AG04450 (cell line): ENCODE measurements at regions of chr12 and their contacts with region 1.

Region 1: DNA sequence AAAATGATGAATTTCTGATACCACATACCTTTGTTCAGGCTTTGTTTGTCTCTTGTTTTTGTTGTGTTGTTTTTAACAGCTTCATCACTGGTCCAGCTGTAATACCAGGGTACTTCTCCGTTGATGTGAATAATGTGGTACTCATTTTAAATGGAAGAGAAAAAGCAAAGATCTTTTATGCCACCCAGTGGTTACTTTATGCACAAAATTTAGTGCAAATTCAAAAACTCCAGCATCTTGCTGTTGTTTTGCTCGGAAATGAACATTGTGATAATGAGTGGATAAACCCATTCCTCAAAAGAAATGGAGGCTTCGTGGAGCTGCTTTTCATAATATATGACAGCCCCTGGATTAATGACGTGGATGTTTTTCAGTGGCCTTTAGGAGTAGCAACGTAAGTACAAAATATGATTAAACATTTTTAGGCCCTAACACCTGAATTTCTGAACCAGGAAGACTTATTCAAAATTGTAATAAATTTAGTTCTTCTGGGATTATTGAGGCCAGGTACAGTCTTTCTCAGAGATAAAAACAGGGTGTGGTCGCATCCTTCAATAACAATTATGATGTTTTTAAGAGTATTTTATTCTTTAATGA is 22.4 kb downstream of the RXYLT1 start:
- DNase-seq: no peak
- H3K4me3 ChIP-seq: no peak overlapping the region
- H3K27ac ChIP-seq: no peak overlapping the region
- H3K27me3 ChIP-seq: no peaks in the 10 kb centered on the region
- CTCF ChIP-seq: peak; percentile 71

Region 2: DNA sequence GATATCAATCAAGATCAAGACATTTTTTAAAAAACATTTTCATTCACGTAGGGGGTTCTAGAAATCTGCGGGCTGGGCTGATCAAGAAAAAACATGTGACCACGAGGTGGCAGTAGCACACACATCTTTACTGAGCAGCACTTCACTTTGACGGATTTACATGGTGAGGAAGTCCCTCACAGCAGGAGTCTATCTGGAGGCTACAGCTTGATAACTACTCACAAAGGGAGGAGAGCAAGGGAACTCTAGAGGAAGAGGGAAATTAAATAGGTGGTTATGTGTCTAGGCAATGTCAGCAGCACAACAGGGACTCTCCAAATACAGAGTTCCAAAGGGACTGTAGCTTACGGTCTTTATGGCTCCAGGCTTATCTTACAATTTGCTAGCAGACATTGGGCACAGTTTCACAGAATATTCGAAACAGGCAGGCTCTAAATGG is 381.9 kb before region 1 on chr12:
- CTCF ChIA-PET with region 1: interaction called, 130 read pairs
- POLR2A ChIA-PET with region 1: no interaction called
- DNase-seq: peak; percentile 27
- H3K4me3 ChIP-seq: no peak overlapping the region
- H3K27ac ChIP-seq: no peak overlapping the region
- H3K27me3 ChIP-seq: no peaks in the 10 kb centered on the region
- CTCF ChIP-seq: peak; percentile 69

Region 3: DNA sequence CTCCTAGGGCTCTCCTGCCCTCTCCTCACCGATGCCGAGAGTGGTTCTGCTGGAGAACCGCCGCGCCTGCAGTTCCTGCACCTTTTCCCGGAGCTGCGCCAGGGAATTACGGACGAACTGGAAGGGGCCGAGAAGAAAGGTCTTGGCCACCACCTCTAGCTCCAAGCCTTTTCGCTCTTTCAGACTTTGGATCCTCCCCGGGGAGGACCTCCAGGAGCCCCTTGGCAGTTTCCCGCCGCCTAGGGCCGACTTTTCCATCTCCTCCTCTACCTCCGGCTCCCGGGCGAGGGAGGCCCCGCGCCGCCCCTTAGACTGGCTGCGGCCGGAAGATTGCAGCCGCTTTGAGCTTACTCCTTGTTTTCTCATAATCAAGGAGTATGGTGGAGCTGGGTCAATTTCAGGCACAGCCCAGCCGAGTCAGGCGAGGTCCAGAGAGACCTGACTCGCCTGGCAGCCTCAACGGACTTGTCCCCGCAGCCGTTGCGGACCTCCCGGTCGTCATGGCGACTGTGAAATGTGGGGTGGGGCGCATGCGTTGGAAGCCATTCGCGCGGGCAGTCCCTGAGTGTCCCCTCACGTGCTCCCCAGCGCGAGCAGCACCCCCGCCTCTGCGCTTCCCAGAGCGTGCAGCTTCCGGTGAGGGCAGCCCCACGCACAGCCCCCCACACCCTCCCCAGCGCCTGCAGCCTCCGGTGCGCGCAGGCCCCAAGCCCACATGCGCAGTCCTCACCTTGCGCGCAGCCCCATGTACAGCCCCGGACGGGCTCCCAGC is 133.9 kb before region 1 on chr12 and contains the start of gene DPY19L2:
- CTCF ChIA-PET with region 1: interaction called, 13 read pairs
- POLR2A ChIA-PET with region 1: no interaction called
- DNase-seq: peak; percentile 32
- H3K4me3 ChIP-seq: peak within 1 kb of the TSS; percentile 75
- H3K27ac ChIP-seq: peak within 1 kb of the TSS; percentile 61
- H3K27me3 ChIP-seq: no peaks in the 10 kb centered on the region
- CTCF ChIP-seq: no peak
- polyA plus RNA-seq, gene DPY19L2: 5.1 and 7.8 TPM in 2 replicates

Region 4: GRCh38 chr12:63779498-63780481 is 22.3 kb before region 1 on chr12 and contains the start of gene RXYLT1:
- CTCF ChIA-PET with region 1: interaction called, 11 read pairs
- POLR2A ChIA-PET with region 1: no interaction called
- DNase-seq: peak; percentile 30
- H3K4me3 ChIP-seq: peak within 1 kb of the TSS; percentile 82
- H3K27ac ChIP-seq: peak within 1 kb of the TSS; percentile 89
- H3K27me3 ChIP-seq: no peaks in the 10 kb centered on the region
- CTCF ChIP-seq: no peak
- polyA plus RNA-seq, gene RXYLT1: 12.6 and 18.2 TPM in 2 replicates

Region 5: DNA sequence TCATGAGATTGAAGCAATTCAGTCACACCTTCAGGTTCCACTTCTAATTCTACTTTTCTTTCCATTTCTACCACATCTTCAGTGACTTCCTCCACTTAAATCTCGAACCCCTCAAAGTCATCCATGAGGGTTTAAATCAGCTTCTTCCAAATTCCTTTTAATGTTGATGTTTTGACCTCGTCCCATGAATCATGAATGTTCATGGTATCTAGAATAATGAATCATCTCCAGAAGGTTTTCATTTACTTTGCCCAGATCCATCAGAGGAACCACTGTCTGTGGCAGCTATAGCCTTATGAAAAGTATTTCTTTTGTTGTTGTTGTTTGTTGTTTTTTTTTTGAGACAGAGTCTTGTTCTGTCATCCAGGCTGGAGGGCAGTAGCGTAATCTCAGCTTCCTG is 14.8 kb before region 1 on chr12:
- CTCF ChIA-PET with region 1: interaction called, 16 read pairs
- POLR2A ChIA-PET with region 1: no interaction called
- DNase-seq: no peak
- H3K4me3 ChIP-seq: no peak overlapping the region
- H3K27ac ChIP-seq: no peak overlapping the region
- H3K27me3 ChIP-seq: no peaks in the 10 kb centered on the region
- CTCF ChIP-seq: no peak

Region 6: DNA sequence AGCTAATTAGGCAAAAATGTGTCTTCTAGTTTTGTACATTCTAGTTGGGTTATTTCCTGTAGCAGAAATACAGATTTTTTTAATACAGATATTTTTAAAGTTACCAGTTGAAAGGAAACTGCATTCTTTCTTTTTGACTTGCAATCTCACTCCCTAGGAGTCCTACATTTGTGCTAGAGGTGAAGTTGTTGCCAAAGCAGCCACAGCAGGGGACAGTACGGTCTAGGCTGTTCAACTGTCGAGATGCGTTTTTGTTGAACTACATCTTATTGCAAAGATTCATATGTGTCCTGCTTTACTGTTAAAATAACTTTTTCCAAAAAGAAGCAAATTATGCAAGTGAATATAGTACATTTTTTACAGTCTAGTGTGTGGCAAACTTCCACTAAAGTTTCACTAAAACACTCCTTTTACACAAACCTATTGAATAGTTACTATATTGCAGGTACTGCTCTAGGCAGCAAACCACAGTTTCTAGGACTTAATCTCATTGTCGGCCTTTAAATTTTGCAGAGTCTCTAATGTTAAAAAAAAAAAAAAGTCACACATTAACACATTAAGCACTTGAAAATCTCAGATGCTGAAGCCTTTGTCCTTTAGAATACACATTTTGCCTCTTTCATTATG is 12.1 kb after region 1 on chr12:
- CTCF ChIA-PET with region 1: interaction called, 19 read pairs
- POLR2A ChIA-PET with region 1: no interaction called
- DNase-seq: no peak
- H3K4me3 ChIP-seq: no peak overlapping the region
- H3K27ac ChIP-seq: no peak overlapping the region
- H3K27me3 ChIP-seq: no peaks in the 10 kb centered on the region
- CTCF ChIP-seq: no peak